ENCODE measurements at regions of chr5 and their contacts with region 1.

Region 1: DNA sequence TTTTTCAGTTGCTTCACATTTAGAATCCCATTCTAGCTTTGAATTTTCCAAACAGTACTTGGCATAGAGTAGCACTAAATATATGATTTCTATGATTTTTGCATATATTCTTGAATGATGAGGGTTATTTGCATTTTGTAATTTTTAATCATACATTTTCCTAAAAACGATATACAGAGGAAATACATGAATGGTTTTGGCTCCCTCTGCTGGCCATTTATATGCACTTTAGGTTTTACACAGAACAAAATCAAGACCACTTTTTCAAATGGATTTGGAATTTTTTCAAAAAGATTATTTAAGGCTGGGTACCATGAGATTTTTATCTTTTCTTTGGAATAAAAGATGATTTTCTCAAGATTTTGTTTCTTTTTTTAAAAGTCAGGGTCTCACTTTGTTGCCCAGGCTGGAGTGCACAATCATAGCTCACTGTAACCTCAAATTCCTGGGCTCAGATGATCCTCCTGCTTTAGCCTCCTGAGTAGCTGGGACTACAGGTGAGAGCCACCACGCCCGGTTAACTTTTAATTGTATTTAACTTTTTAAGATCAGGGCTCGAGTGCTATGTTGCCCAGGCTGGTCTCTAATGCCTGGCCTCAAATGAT is 16.7 kb upstream of the COMMD10 start:
- DNase-seq: peak in 1 of 10 donors; percentile 22

Region 2: GRCh38 chr5:115888027-115888426 is 180.1 kb before region 1 on chr5:
- intact Hi-C with region 1: loop called (anchors 5 kb)
- DNase-seq: no peak

Region 3: DNA sequence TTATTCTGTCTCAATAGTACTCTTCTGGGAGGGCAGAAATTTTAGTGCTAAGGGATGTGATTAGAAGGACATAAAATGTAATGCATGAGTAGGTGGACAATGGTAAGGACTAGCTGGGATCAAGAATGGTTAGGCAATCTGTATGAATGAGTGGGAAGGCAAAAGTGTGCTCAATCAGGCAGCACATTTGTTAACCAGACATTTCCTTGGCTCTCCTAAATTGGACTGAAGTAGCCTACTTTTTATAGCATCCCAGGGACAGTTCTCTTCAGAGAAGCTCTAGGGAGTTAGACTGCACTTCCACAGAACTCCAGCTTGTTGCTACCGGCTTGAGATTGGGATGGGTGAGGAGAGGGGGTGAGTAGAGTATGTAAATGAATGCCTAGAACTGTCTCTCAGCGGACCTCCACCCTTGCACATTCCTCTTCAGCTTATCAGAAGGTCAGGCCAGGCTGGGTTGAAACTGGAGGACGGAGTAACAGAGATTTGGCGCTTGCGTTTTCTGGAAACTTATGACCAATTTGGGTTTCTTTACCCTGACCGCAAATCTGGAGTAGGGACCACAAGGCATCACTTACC is 54.8 kb before region 1 on chr5:
- intact Hi-C with region 1: no loop called
- DNase-seq: no peak

Measured in posterior cingulate gyrus (tissue), 11 donors.